Spleen (tissue), 13 donors: ENCODE measurements at regions of chr2 and their contacts with region 1.

Region 1: GRCh38 chr2:70142590-70143313 is 48.1 kb downstream of the C2orf42 start:
- DNase-seq: peak; percentile 100
- H3K4me3 ChIP-seq: peak overlapping the region in 5 of 8 donors; percentile 39 to 74 (median 51)
- H3K27ac ChIP-seq: peak overlapping the region; percentile 99 to 100 (median 100)
- H3K4me1 ChIP-seq: peaks cover 18 to 48% (median 35%) of the 10 kb centered on the region in 6 donors
- H3K27me3 ChIP-seq: no peaks in the 10 kb centered on the region
- CTCF ChIP-seq: peak; percentile 97 to 100 (median 100)
- POLR2A ChIP-seq: peak in 2 of 3 donors; percentile 42 to 49

Region 2: GRCh38 chr2:69724540-69725159 is 418.1 kb before region 1 on chr2:
- intact Hi-C with region 1: no loop called
- DNase-seq: peak; percentile 92
- H3K4me3 ChIP-seq: peak overlapping the region in 5 of 8 donors; percentile 14 to 59 (median 24)
- H3K27ac ChIP-seq: no peak overlapping the region
- H3K4me1 ChIP-seq: peaks cover 0 to 12% (median 6%) of the 10 kb centered on the region in 6 donors
- H3K27me3 ChIP-seq: no peaks in the 10 kb centered on the region
- CTCF ChIP-seq: peak; percentile 90 to 97 (median 96)
- POLR2A ChIP-seq: no peak

Region 3: DNA sequence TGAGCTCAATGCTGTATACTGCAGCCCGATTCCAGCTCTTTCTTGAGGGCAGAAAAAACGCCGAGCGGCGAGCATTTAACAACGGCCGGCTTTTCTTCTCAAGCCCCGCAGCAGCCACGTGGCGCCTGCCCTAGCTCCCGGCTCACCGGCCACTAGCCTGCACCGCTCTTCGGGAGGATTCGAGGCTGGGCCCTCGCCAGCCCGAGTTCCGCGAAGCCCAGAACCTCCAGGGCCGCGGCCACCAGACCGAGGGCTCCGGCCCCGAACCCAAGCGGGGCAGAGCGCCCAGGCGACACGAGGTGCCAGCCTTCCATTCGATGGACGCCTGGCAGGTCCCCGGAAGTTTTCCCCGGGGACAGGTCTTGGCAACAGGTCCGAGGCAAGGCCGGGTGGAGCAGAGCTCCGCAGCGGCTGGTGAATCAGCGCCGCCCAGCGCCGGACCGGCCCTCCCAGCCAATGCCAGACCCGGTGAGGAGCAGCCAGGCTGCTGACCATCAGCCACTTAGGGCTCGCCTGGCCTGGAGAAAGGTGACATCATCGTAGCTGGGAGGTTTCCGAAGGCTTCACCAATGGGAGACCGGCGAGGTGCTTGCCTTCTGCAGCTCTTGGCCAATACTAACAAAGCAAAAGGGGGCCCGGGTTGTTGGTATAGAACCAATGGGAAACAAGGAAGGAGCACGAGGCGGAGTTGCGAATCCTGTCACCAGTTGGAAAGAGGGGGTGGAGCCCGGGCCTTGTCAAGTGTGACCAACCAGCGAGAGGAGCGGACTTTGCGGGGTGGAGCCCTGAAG is 228.4 kb before region 1 on chr2:
- intact Hi-C with region 1: loop called (anchors 2 kb)
- DNase-seq: peak; percentile 98
- H3K4me3 ChIP-seq: peak overlapping the region; percentile 40 to 85 (median 76)
- H3K27ac ChIP-seq: peak overlapping the region; percentile 80 to 100 (median 99)
- H3K4me1 ChIP-seq: peaks cover 13 to 66% (median 53%) of the 10 kb centered on the region in 6 donors
- H3K27me3 ChIP-seq: no peaks in the 10 kb centered on the region
- CTCF ChIP-seq: peak in 4 of 11 experiments; percentile 9 to 33 (median 26)
- POLR2A ChIP-seq: peak; percentile 75 to 97 (median 85)

Region 4: DNA sequence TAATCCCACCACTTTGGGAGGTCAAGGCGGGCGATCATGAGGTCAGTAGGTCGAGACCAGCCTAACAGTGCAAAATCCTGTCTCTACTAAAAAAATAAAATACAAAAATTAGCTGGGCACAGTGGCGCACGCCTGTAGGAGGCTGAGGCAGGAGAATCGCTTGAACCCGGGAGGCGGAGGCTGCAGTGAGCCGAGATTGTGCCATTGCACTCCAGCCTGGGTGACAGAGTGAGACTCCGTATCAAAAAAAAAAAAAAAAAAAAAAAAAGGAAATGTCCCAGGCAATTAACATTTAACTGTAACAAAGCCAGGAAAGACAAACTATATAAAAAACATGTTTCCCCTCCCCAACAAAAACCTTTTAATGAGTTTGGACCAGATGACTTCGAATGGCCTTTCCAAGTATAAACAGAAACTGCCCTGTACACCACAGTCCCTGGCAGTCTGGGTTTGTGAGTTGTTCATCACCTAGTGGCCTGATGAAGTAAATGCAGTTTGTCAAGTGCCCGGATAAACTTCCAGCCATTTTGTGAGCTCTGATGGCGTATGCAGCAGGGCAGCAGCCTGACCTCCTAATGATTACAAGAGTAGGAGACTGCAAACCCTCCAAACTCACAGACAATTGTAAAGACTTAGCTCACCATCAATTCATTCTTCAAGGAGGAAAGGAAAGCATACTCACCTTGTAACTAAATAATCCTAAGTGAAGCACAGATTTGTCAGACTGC is 72.0 kb before region 1 on chr2:
- intact Hi-C with region 1: loop called (anchors 5 kb)
- DNase-seq: no peak
- H3K4me3 ChIP-seq: peak overlapping the region in 1 of 8 donors; percentile 46
- H3K27ac ChIP-seq: peak overlapping the region; percentile 44 to 88 (median 80)
- H3K4me1 ChIP-seq: peaks cover 0 to 58% (median 39%) of the 10 kb centered on the region in 6 donors
- H3K27me3 ChIP-seq: no peaks in the 10 kb centered on the region
- CTCF ChIP-seq: peak; percentile 68 to 95 (median 88)
- POLR2A ChIP-seq: no peak

Region 5: GRCh38 chr2:70086838-70087701 is 55.7 kb before region 1 on chr2 and contains the start of gene PCBP1:
- intact Hi-C with region 1: loop called (anchors 5 kb)
- DNase-seq: peak; percentile 98
- H3K4me3 ChIP-seq: peak within 1 kb of the TSS; percentile 75 to 97 (median 91)
- H3K27ac ChIP-seq: peak within 1 kb of the TSS; percentile 97 to 100 (median 100)
- H3K4me1 ChIP-seq: peaks cover 33 to 80% (median 66%) of the 10 kb centered on the region in 6 donors
- H3K27me3 ChIP-seq: no peaks in the 10 kb centered on the region
- CTCF ChIP-seq: no peak
- POLR2A ChIP-seq: peak in 2 of 3 donors; percentile 18 to 68
- total RNA-seq, gene PCBP1: 256 to 351 (median 301) TPM

Region 6: GRCh38 chr2:70181363-70181956 is 38.7 kb after region 1 on chr2:
- intact Hi-C with region 1: loop called (anchors 5 kb)
- DNase-seq: peak; percentile 78
- H3K4me3 ChIP-seq: no peak overlapping the region
- H3K27ac ChIP-seq: peak overlapping the region in 5 of 8 donors; percentile 32 to 72 (median 58)
- H3K4me1 ChIP-seq: peaks cover 0 to 10% (median 0%) of the 10 kb centered on the region in 6 donors
- H3K27me3 ChIP-seq: no peaks in the 10 kb centered on the region
- CTCF ChIP-seq: no peak
- POLR2A ChIP-seq: no peak

Region 7: GRCh38 chr2:70300771-70301343 is 158.1 kb after region 1 on chr2:
- intact Hi-C with region 1: no loop called
- DNase-seq: no peak
- H3K4me3 ChIP-seq: peak overlapping the region; percentile 61 to 98 (median 90)
- H3K27ac ChIP-seq: peak overlapping the region; percentile 82 to 92 (median 90)
- H3K4me1 ChIP-seq: peaks cover 0 to 36% (median 22%) of the 10 kb centered on the region in 6 donors
- H3K27me3 ChIP-seq: no peaks in the 10 kb centered on the region
- CTCF ChIP-seq: peak in 1 of 11 experiments; percentile 31
- POLR2A ChIP-seq: no peak